IMR-90 (cell line): ENCODE measurements at regions of chr12 and their contacts with region 1.

Region 1: GRCh38 chr12:77060136-77060882 is 5.1 kb downstream of the E2F7 start:
- DNase-seq: no peak
- ATAC-seq: no peak
- H3K4me3 ChIP-seq: no peak overlapping the region
- H3K27ac ChIP-seq: no peak overlapping the region
- H3K4me1 ChIP-seq: peaks cover 7% of the 10 kb centered on the region; the same call in 1 of the 2 replicates
- H3K27me3 ChIP-seq: no peaks in the 10 kb centered on the region
- CTCF ChIP-seq: no peak
- POLR2A ChIP-seq: no peak
- RAD21 ChIP-seq: no peak

Region 2: DNA sequence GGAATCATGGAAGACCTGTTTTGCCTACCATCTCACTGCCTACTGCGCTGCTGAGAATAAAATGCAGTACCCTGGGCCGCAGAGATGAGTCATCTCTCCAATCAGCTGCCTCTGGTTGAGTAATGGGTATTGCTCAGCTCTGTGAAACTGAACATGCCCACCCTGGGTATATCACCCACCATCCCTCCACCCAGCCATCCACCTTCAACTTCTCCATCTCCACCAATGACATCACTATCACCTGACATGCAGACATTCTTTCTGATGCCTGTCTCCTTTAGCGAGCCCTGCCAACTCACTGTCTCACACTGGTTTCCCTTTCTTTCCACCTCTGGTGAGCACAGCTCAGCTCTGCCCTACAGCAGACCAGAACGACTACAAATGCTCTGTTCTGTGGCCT is 28.6 kb before region 1 on chr12:
- CTCF ChIA-PET with region 1: no interaction called
- POLR2A ChIA-PET with region 1: no interaction called
- dilution Hi-C with region 1: no loop called
- in situ Hi-C with region 1: no loop called
- intact Hi-C with region 1: no loop called
- DNase-seq: peak; percentile 61
- ATAC-seq: peak; percentile 66
- H3K4me3 ChIP-seq: no peak overlapping the region
- H3K27ac ChIP-seq: no peak overlapping the region
- H3K4me1 ChIP-seq: peaks cover 4% of the 10 kb centered on the region
- H3K27me3 ChIP-seq: no peaks in the 10 kb centered on the region
- CTCF ChIP-seq: no peak
- POLR2A ChIP-seq: no peak
- RAD21 ChIP-seq: no peak

Region 3: DNA sequence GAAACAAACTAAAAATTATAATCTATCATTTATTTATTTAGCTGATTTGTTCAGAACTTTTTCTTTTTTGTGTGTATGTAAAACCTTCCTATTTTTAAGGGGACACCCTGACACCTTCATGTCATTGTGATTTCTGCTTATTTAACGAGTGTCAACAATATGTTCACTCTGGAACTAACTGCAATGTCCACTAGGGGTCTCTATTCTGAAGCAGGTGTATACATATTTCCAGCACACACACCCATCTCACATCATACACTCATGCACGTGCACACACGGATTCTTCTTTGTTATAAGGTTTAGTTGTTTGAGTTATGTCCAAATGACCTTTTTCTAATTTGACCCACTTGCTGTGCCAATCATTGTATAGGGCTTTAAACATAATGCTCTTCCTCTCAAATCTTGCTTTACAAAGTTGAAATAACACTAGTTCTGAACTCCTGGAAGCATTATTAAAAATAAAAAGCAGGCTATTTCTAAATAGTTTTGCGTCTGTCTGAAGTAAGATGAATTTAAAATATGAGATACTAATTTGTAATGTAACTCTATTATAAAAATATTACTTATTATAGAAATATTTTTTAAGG is 10.4 kb before region 1 on chr12:
- CTCF ChIA-PET with region 1: interaction called, 19 read pairs
- POLR2A ChIA-PET with region 1: no interaction called
- dilution Hi-C with region 1: no loop called
- in situ Hi-C with region 1: no loop called
- intact Hi-C with region 1: no loop called
- DNase-seq: peak; percentile 70
- ATAC-seq: peak; percentile 80
- H3K4me3 ChIP-seq: no peak overlapping the region
- H3K27ac ChIP-seq: no peak overlapping the region
- H3K4me1 ChIP-seq: no peaks in the 10 kb centered on the region
- H3K27me3 ChIP-seq: no peaks in the 10 kb centered on the region
- CTCF ChIP-seq: peak; percentile 69
- POLR2A ChIP-seq: no peak
- RAD21 ChIP-seq: peak; percentile 71